KBM-7 (cell line): ENCODE measurements at regions of chr2 and their contacts with region 1.

Region 1: GRCh38 chr2:79860228-79861058 is 347.6 kb downstream of the CTNNA2 start:
- DNase-seq: peak; percentile 60

Region 2: GRCh38 chr2:79235135-79235534 is 625.3 kb before region 1 on chr2:
- in situ Hi-C with region 1: loop called (anchors 25 kb)
- DNase-seq: peak; percentile 5

Region 3: GRCh38 chr2:79530443-79530842 is 330.0 kb before region 1 on chr2:
- in situ Hi-C with region 1: loop called (anchors 25 kb)
- DNase-seq: peak; percentile 29